Activated T-helper 1 cell treated with anti-CD3 and anti-CD28 coated beads, Interleukin-12 subunit alpha, Interleukin-12 subunit beta, Interleukin-2, Interleukin-4 antibody, amounts not matched to agents 30 ng/mL and 10 ng/mL and 1 ng/mL, durations not matched to agents 14 hours and 24 hours and 36 hours (primary cell): ENCODE measurements at regions of chr14 and their contacts with region 1.

Region 1: DNA sequence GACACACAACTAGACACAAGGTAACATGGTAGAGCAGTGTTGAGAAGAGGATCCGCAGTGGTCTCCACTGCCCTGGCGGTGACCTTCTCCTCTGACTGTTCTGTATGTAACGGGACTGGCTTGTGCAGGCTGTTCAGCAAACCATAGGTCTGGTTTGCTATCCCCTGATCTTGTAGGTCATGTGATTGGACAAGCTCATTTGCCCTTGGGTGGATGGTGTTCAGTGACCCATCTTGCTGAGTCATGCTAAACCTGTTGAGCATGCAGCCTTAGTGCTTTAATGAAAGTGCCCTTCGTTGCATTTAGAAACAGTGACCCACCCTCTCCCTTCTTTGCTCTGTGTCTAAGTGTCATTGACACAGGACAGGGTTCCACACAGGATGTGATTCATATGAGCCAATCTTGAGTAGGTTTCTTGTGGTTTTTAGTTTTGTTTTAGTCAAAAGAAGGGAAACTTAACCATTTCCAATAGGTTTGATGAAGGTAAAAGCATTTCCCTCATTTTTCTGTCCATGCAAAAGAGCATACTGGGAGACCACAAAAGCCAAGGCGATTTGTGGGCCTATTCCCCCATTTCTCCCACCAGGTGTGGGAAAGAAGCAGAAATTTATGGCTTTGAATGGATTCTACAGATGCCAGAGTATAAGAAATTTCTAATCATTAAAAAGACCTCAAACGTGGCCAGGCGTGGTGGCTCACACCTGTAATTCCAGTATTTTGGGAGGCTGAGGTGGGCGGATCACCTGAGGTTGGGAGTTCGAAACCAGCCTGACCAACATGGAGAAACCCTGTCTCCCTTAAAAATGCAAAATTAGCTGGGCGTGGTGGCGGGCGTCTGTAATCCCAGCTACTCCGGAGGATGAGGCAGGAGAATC is 32.6 kb upstream of the HIF1A start:
- DNase-seq: peak; percentile 64
- H3K4me3 Mint-ChIP-seq: peak overlapping the region; percentile 76
- H3K27ac Mint-ChIP-seq: peak overlapping the region; percentile 99
- H3K4me1 Mint-ChIP-seq: peaks cover 70% of the 10 kb centered on the region
- H3K27me3 Mint-ChIP-seq: no peaks in the 10 kb centered on the region

Region 2: DNA sequence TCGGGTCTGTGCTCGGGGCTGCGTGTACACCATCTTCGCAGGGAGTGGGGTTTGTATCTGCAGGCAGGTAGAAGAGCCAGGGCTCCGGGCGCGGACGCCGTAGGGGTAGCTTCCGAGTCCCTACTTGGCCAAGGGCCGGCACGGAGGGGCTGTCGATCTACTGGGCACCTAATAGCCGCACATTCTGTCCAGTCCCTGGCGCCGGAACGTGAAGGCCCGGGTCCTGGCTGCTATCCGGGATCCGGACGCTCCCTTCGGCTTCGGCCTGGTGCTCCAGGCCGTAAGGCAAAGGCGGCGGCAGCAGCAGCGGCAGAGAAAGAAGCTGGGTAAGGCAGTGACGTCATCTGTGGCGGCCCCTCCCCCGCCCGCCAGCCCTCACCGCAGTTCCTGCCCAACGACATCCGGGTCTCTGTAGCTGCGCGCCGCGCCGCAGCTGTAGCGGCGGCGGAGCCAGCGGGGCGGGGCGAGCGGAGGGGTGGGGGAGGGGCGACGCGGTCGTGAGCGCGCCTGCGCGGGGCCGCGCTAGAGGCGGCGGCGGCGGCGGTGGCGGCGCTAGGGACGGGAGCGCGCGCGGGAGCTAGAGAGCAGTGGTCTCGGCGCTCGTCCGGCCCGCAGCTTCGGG is 1413.9 kb before region 1 on chr14 and contains the start of gene PPM1A:
- intact Hi-C with region 1: loop called (anchors 5 kb)
- DNase-seq: peak; percentile 90
- H3K4me3 Mint-ChIP-seq: peak within 1 kb of the TSS; percentile 96
- H3K27ac Mint-ChIP-seq: peak within 1 kb of the TSS; percentile 100
- H3K4me1 Mint-ChIP-seq: peaks cover 59% of the 10 kb centered on the region
- H3K27me3 Mint-ChIP-seq: no peaks in the 10 kb centered on the region
- total RNA-seq, gene PPM1A: 43.9 and 50.7 TPM in 2 replicates

Region 3: DNA sequence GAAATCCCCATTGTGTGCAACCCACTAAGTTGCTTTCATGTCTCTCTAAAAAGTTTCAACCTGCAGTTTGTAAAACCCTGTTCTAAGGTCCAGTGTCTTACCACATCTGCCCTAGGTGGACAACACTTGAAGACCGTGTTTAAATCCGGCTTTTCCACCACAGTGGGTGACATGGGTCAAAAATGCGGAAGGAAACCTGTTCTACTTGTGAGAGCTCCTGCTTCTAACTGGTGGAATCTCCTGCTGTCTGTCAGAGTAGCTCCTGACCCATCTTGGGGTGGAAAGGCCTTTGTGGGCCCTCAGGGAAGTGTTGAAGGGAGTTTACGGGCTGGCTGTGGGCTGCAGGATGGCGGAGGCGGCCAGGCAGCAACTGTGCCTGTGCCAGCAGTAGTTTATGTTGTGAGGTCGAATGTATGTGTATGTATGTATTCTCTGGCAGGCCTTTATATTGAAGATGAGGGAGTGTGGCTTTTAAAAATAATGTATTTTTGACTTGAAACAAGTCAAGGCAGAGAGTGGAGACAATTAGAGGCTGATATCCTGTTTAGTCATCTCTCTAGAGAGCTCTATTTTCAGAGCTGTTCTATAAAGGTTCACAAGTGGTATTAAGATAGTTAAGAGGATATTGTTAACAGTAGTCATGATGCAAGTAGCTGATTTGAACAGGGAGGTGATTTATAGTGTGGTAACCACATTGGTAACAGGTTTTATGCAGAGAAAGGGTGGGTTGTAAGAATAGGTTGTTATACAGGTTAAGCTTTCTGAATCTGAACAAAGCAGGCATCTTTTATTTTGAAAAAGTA is 274.3 kb before region 1 on chr14:
- intact Hi-C with region 1: loop called (anchors 5 kb)
- DNase-seq: no peak
- H3K4me3 Mint-ChIP-seq: no peak overlapping the region
- H3K27ac Mint-ChIP-seq: no peak overlapping the region
- H3K4me1 Mint-ChIP-seq: peaks cover 13% of the 10 kb centered on the region
- H3K27me3 Mint-ChIP-seq: no peaks in the 10 kb centered on the region

Region 4: GRCh38 chr14:61525293-61526011 is 137.2 kb before region 1 on chr14:
- intact Hi-C with region 1: loop called (anchors 1 kb)
- DNase-seq: peak; percentile 65
- H3K4me3 Mint-ChIP-seq: peak overlapping the region; percentile 64
- H3K27ac Mint-ChIP-seq: peak overlapping the region; percentile 89
- H3K4me1 Mint-ChIP-seq: peaks cover 82% of the 10 kb centered on the region
- H3K27me3 Mint-ChIP-seq: no peaks in the 10 kb centered on the region

Region 5: GRCh38 chr14:61585598-61586543 is 76.8 kb before region 1 on chr14:
- intact Hi-C with region 1: no loop called
- DNase-seq: no peak
- H3K4me3 Mint-ChIP-seq: no peak overlapping the region
- H3K27ac Mint-ChIP-seq: no peak overlapping the region
- H3K4me1 Mint-ChIP-seq: peaks cover 43% of the 10 kb centered on the region
- H3K27me3 Mint-ChIP-seq: peaks cover 5% of the 10 kb centered on the region

Region 6: DNA sequence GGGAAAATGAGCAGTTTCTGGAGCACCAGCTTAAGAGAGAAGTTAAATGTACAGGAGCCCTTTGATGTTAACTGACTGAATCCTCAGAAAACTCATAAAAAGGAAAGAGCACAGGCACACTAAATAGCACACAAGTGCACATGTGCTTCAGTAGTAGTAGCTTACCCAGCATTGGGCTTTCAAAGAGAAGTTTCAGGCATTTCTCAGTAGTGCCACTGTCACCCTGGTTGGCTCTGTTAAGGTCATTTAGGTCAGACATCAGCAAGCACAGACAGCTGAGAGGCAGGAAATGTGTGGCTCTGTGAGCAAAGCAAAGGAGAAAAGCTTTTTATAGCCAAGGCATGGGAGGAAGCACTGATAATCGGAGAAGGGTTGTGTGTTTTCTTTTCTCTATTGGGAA is 63.7 kb before region 1 on chr14:
- intact Hi-C with region 1: loop called (anchors 1 kb)
- DNase-seq: peak; percentile 34
- H3K4me3 Mint-ChIP-seq: peak overlapping the region; percentile 45
- H3K27ac Mint-ChIP-seq: peak overlapping the region; percentile 85
- H3K4me1 Mint-ChIP-seq: peaks cover 73% of the 10 kb centered on the region
- H3K27me3 Mint-ChIP-seq: no peaks in the 10 kb centered on the region

Region 7: DNA sequence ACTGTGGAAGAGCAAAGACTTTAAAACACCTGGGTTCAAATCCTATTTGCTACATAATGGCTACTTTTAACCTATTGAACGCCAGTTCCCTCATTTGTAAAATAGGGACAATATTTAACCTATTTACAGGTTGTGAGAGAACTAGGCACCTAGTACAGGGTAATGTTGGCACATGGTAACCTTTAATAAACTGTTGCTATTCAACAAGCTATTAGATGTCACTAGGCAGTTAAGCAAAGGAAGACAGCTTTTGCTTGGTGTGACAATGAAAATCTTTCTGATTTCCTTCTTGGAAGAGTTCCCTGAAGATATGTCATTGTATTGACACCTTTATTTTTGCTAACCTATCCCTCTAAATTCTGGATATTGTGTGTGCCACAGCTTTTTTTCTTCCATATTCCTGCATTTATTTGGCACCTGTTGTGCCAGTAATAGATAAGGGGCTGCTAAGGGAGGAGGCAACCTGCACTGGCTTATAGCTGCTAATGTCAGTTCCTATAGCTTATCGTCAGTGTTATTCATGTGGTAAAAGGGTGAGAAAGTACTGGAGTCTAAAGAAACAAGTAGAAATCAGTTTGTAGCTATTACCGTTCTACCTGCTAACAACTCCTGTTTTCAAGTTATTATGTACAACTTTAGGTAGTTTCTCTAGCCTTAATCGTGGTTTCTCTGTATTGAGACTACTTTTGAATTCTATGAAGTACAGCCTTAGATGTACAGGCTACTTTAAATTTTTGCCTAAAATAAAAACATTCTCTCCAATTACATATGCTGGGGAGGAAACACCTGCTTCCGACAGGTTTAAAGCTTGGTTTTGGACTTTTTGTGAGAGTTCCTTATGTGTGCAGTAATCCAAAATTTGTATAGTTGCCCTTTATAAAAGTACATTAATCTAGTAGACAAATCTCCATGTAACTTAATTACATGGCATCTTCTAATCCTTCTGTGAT is 56.9 kb after region 1 on chr14:
- intact Hi-C with region 1: loop called (anchors 2 kb)
- DNase-seq: no peak
- H3K4me3 Mint-ChIP-seq: peak overlapping the region; percentile 63
- H3K27ac Mint-ChIP-seq: peak overlapping the region; percentile 74
- H3K4me1 Mint-ChIP-seq: peaks cover 70% of the 10 kb centered on the region
- H3K27me3 Mint-ChIP-seq: no peaks in the 10 kb centered on the region

Region 8: GRCh38 chr14:61750708-61751474 is 88.2 kb after region 1 on chr14:
- intact Hi-C with region 1: no loop called
- DNase-seq: peak; percentile 85
- H3K4me3 Mint-ChIP-seq: peak overlapping the region; percentile 95
- H3K27ac Mint-ChIP-seq: peak overlapping the region; percentile 94
- H3K4me1 Mint-ChIP-seq: peaks cover 57% of the 10 kb centered on the region
- H3K27me3 Mint-ChIP-seq: no peaks in the 10 kb centered on the region